Left cardiac atrium (tissue), 4 donors: ENCODE measurements at regions of chr12 and their contacts with region 1.

Region 1: DNA sequence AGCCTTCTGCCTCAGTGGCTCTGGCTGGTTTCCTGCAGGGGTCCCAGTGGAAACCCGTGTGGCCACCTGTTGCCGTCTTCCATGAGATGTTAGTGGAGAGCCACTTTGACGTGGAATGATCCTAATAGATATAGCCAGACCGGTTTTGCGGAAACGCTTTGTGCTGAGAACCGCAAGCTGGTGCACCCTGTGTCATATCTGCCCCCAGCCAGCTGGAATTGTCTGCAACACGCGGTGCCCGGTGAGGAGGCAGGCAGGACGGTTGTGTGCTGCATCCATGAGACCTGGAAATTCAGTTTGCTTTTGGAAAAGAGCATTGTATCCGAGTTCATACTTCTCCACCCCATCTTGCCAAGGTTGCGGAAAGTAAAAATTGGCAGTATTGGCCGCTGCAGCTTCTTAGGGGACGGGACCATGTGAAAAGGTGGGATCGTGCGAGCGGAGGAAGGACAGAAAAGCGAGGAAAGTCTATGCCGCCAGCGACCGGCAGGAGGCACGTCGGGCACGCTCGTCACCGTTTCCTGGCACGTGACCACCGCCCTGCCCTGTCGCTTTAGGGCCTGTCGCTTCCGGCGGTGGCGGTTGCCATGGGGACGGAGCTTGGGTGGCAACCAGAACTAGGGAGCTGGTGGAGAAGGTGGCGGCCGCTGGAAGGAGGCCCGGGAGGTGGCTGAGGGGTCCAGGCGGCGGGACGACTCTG is at the start of gene CFAP251:
- DNase-seq: peak; percentile 99
- ATAC-seq: peak; percentile 95 to 98
- total RNA-seq, gene CFAP251: 0.77 to 1.3 TPM

Region 2: GRCh38 chr12:122031342-122032216 is 113.5 kb after region 1 on chr12:
- intact Hi-C with region 1: loop called in 1 of 2 experiments (anchors 5 kb)
- DNase-seq: peak; percentile 50
- ATAC-seq: peak in 1 of 2 donors; percentile 57

Region 3: DNA sequence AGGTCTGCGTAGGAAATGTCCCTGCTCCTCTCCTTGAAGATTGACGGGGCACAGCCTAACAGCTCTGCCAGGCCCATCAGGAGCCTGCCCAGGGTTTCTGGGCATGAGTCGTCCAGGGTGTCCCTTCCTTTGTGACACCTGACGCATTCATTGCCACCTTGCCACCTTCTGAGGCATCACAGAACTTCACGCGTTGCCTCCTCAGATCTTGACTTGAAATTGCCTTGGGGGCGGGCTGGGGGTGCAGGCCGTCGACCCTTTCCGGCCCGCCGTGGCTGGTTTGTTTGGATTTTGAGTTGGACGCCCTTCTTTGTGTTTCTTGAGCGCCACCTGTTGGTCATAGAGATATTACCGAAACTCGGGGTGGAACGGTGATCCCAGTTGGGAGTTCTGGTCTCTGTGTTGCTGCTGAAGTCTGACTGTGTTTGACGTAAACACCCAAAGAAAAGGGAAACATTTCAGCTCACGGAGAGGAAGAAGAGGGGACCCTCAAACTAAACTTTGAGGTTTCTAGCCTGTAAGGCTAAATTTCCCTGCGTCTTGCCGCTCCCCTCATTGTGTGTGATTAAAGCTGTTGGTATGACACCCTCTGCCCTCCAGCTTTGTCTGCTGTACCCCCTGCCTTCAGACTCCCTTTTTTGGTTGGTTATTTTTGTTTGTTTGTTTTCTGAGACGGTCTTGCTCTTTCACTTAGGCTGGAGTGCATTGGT is 205.1 kb after region 1 on chr12:
- intact Hi-C with region 1: loop called (anchors 10 kb)
- DNase-seq: peak; percentile 64
- ATAC-seq: peak; percentile 46 to 62